ENCODE measurements at regions of chr4 and their contacts with region 1.

Region 1: DNA sequence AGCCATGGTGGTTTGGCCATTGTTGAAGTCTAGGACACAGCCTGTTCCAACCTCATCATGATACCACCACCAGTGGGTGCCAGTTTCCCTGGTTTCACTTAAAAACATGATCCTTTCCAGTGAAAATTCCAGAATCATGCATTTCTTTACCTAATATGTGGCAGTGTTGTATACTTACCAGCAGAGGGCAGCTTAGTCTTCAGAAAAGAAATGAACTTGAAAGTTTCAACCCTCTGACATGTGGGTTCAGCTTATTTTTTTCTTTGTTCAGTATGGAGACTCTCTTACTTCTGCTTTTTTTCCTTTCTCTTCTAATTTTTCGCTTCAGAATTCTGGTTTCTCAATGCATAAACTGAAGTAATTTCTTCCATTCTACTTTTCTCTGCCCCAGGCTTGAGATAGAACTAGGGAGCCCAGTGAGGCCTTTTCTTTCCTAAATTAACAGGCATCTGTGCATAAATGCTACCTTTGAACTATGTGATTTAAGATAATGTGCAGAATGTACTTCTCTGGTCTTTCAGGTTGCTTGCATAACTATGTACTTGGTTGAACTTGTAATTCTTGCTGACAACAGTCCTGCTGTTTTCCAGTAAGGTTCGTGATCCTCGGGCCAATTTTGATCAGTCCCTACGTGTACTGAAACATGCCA is 10.7 kb downstream of the LIAS start:
- DNase-seq: no peak
- ATAC-seq: peak; percentile 93
- H3K4me3 ChIP-seq: no peak overlapping the region
- H3K27ac ChIP-seq: peak overlapping the region in 1 of 2 donors; percentile 64
- H3K4me1 ChIP-seq: no peaks in the 10 kb centered on the region
- H3K27me3 ChIP-seq: no peaks in the 10 kb centered on the region

Region 2: GRCh38 chr4:39539089-39539700 is 69.6 kb after region 1 on chr4:
- intact Hi-C with region 1: no loop called
- DNase-seq: no peak
- ATAC-seq: no peak
- H3K4me3 ChIP-seq: no peak overlapping the region
- H3K27ac ChIP-seq: no peak overlapping the region
- H3K4me1 ChIP-seq: peaks cover 0 to 3% of the 10 kb centered on the region in 2 donors
- H3K27me3 ChIP-seq: no peaks in the 10 kb centered on the region

Region 3: DNA sequence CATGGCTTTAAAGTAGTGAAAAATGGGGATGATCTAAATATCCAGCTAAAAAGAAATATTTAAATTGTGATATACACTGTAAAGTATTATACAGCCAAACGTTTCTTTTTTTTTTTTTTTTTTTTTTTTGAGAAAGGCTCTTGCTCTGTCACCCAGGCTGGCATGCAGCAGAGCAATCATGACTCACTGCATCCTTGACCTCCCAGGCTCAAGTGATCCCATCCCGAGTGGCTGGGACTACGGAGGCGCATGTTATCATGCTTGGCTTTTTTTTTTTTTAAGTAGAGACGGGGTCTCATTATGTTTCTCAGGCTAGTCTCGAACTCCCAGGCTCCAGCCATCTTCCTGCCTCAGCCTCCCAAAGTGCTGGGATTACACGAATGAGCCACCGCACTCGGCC is 152.0 kb after region 1 on chr4:
- intact Hi-C with region 1: no loop called
- DNase-seq: peak in 1 of 2 donors; percentile 77
- ATAC-seq: peak; percentile 85
- H3K4me3 ChIP-seq: no peak overlapping the region
- H3K27ac ChIP-seq: peak overlapping the region in 1 of 2 donors; percentile 10
- H3K4me1 ChIP-seq: no peaks in the 10 kb centered on the region
- H3K27me3 ChIP-seq: no peaks in the 10 kb centered on the region

Region 4: DNA sequence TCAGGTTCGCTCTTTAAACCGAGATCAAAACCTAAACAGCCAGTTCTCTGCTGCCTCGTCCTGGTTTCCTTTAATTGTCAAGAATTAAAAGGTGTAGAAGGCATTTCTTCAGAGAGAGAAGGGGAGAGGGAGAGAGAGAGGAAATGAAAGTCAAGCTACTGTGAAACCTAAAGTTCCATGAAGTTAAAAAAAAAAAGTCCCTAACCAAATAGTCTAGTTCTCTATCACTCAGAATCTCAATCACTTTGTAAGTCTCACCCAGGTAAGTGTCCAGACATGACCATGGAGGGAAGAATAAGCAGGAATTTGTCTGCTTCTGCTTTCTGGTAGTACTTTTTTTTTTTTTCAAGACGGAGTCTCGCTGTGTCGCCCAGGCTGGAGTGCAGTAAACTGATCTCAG is 187.9 kb after region 1 on chr4:
- intact Hi-C with region 1: loop called (anchors 2 to 5 kb)
- DNase-seq: no peak
- ATAC-seq: no peak
- H3K4me3 ChIP-seq: no peak overlapping the region
- H3K27ac ChIP-seq: no peak overlapping the region
- H3K4me1 ChIP-seq: no peaks in the 10 kb centered on the region
- H3K27me3 ChIP-seq: no peaks in the 10 kb centered on the region

Measured in aorta (tissue), 5 donors.